ENCODE measurements at regions of chr4 and their contacts with region 1.

Region 1: GRCh38 chr4:98584265-98584664 is 74.1 kb downstream of the TSPAN5 start:
- DNase-seq: no peak

Region 2: DNA sequence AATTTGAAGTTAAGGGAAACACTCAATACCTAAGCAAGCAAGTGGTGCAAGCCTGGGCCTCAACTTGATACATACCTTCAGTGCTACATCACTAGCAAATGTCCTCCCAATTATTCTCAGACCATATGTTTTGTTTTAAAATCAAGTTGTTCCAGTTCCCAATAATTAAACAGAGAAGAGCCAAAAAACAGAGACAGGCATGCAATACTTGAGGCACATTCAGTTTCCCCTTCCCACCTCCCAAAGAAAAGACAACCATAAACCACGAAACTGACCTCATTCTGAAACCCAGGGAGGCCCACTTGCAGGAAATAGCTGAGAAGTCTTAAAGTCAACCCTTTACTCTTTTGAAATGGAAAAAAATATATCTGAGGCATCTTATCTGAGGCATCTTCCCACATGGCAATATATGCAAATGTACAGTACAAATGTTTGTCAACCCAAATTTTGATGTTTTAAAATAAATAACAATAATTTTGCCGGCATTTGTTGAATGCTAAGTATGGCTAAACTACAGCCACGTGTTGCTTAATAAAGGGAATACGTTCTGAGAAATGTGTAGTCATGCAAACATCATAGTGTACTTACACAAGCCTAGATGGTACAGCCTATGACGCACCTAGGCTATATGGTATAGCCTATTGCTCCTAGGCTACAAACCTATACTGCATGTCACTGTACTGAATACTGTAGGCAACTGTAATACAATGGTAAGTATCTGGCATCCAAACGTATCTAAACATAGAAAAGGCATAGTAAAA is 73.3 kb before region 1 on chr4:
- intact Hi-C with region 1: no loop called
- DNase-seq: no peak

Region 3: GRCh38 chr4:98658287-98659105 is 74.2 kb after region 1 on chr4 and contains the start of gene TSPAN5:
- intact Hi-C with region 1: loop called (anchors 10 kb)
- DNase-seq: peak; percentile 32 to 94 (median 86)